CD8-positive, alpha-beta T cell (primary cell): ENCODE measurements at regions of chr22 and their contacts with region 1.

Region 1: GRCh38 chr22:42500161-42500835 is 19.3 kb downstream of the RRP7A start:
- DNase-seq: peak; percentile 67 to 91 (median 82)
- ATAC-seq: peak; percentile 94
- H3K4me3 ChIP-seq: peak overlapping the region; percentile 42 to 48
- H3K4me3 Mint-ChIP-seq: peak overlapping the region; percentile 72
- H3K27ac ChIP-seq: no peak overlapping the region
- H3K27ac Mint-ChIP-seq: no peak overlapping the region
- H3K4me1 ChIP-seq: peaks cover 7% of the 10 kb centered on the region
- H3K4me1 Mint-ChIP-seq: peaks cover 4% of the 10 kb centered on the region
- H3K27me3 ChIP-seq: no peaks in the 10 kb centered on the region
- H3K27me3 Mint-ChIP-seq: no peaks in the 10 kb centered on the region
- CTCF ChIP-seq: no peak

Region 2: GRCh38 chr22:42180349-42180842 is 319.9 kb before region 1 on chr22:
- CTCF ChIA-PET with region 1: no interaction called
- POLR2A ChIA-PET with region 1: no interaction called
- intact Hi-C with region 1: no loop called
- DNase-seq: peak in 8 of 9 experiments; percentile 18 to 82 (median 59)
- ATAC-seq: peak; percentile 96
- H3K4me3 ChIP-seq: no peak overlapping the region
- H3K4me3 Mint-ChIP-seq: peak overlapping the region; percentile 51
- H3K27ac ChIP-seq: peak overlapping the region in 1 of 2 experiments; percentile 61
- H3K27ac Mint-ChIP-seq: peak overlapping the region; percentile 88
- H3K4me1 ChIP-seq: peaks cover 26% of the 10 kb centered on the region
- H3K4me1 Mint-ChIP-seq: peaks cover 56% of the 10 kb centered on the region
- H3K27me3 ChIP-seq: no peaks in the 10 kb centered on the region
- H3K27me3 Mint-ChIP-seq: no peaks in the 10 kb centered on the region
- CTCF ChIP-seq: no peak

Region 3: GRCh38 chr22:42369245-42370041 is 130.9 kb before region 1 on chr22:
- CTCF ChIA-PET with region 1: no interaction called
- POLR2A ChIA-PET with region 1: no interaction called
- intact Hi-C with region 1: loop called in 1 of 2 experiments (anchors 1 kb)
- DNase-seq: peak; percentile 49 to 91 (median 82)
- ATAC-seq: peak; percentile 97
- H3K4me3 ChIP-seq: peak overlapping the region; percentile 60 to 86
- H3K4me3 Mint-ChIP-seq: peak overlapping the region; percentile 85
- H3K27ac ChIP-seq: no peak overlapping the region
- H3K27ac Mint-ChIP-seq: peak overlapping the region; percentile 9
- H3K4me1 ChIP-seq: peaks cover 18% of the 10 kb centered on the region
- H3K4me1 Mint-ChIP-seq: peaks cover 19% of the 10 kb centered on the region
- H3K27me3 ChIP-seq: peaks cover 9 to 24% of the 10 kb centered on the region in 2 experiments
- H3K27me3 Mint-ChIP-seq: peaks cover 23% of the 10 kb centered on the region
- CTCF ChIP-seq: no peak

Region 4: DNA sequence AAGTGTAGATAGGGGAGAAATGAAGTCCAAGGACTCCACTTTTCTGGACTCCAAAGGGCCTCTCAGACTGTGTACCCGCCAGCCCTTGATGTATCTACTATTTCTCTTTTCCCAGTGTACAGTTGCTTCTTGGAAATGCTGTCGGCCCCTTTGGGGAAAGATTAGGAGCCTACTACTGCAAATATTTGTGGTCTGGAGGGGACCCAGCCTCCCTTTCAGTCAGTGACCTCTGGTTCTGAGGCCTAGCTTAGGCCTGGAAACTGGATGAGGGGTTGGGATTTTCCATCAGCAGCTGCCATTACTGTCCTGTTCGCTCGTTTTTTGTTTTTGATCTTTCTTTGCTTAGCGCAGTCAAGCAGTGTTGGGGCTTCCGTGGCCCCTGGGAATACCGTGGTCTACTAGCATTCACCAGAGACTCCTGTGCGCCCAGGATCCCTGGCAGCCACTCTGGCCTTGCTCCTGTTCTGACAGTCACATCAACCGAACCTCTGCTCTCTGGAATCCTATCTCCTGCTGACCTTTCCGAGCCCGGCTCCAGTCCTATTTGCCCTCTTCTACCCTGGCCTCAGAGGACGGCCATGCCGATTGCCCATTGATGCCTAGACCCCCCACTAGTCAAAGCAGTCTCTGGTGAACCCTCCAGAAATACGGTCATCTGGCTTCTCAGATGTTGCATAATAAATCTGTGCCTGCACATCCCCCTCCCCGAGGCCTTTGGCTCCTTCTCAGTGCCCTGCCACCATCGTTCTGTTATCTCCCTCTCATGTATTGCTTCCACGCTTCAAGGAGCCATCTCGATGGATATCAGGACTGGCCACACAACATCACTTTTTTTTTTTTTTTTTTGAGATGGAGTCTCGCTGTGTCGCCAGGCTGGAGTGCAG is 20.6 kb after region 1 on chr22:
- CTCF ChIA-PET with region 1: no interaction called
- POLR2A ChIA-PET with region 1: no interaction called
- intact Hi-C with region 1: loop called in 1 of 2 experiments (anchors 1 kb)
- DNase-seq: no peak
- ATAC-seq: no peak
- H3K4me3 ChIP-seq: no peak overlapping the region
- H3K4me3 Mint-ChIP-seq: peak overlapping the region; percentile 97
- H3K27ac ChIP-seq: no peak overlapping the region
- H3K27ac Mint-ChIP-seq: no peak overlapping the region
- H3K4me1 ChIP-seq: peaks cover 16% of the 10 kb centered on the region
- H3K4me1 Mint-ChIP-seq: peaks cover 17% of the 10 kb centered on the region
- H3K27me3 ChIP-seq: no peaks in the 10 kb centered on the region
- H3K27me3 Mint-ChIP-seq: no peaks in the 10 kb centered on the region
- CTCF ChIP-seq: no peak